ENCODE measurements at regions of chr2 and their contacts with region 1.

Region 1: GRCh38 chr2:216108967-216109921 is at the start of gene XRCC5:
- DNase-seq: peak; percentile 99
- H3K4me3 Mint-ChIP-seq: peak within 1 kb of the TSS; percentile 100
- H3K27ac Mint-ChIP-seq: peak within 1 kb of the TSS; percentile 98
- H3K4me1 Mint-ChIP-seq: peaks cover 47% of the 10 kb centered on the region
- H3K27me3 Mint-ChIP-seq: peaks cover 4% of the 10 kb centered on the region
- total RNA-seq, gene XRCC5: 476 and 510 TPM in 2 replicates

Region 2: GRCh38 chr2:215311625-215312396 is 797.4 kb before region 1 on chr2 and contains the start of gene ATIC:
- intact Hi-C with region 1: loop called (anchors 5 kb)
- DNase-seq: peak; percentile 98
- H3K4me3 Mint-ChIP-seq: peak within 1 kb of the TSS; percentile 95
- H3K27ac Mint-ChIP-seq: peak within 1 kb of the TSS; percentile 95
- H3K4me1 Mint-ChIP-seq: peaks cover 31% of the 10 kb centered on the region
- H3K27me3 Mint-ChIP-seq: peaks cover 4% of the 10 kb centered on the region
- total RNA-seq, gene ATIC: 316 and 322 TPM in 2 replicates

Region 3: GRCh38 chr2:216034065-216034464 is 75.2 kb before region 1 on chr2:
- intact Hi-C with region 1: loop called (anchors 2 kb)
- DNase-seq: peak; percentile 94
- H3K4me3 Mint-ChIP-seq: no peak overlapping the region
- H3K27ac Mint-ChIP-seq: no peak overlapping the region
- H3K4me1 Mint-ChIP-seq: peaks cover 36% of the 10 kb centered on the region
- H3K27me3 Mint-ChIP-seq: no peaks in the 10 kb centered on the region

Region 4: DNA sequence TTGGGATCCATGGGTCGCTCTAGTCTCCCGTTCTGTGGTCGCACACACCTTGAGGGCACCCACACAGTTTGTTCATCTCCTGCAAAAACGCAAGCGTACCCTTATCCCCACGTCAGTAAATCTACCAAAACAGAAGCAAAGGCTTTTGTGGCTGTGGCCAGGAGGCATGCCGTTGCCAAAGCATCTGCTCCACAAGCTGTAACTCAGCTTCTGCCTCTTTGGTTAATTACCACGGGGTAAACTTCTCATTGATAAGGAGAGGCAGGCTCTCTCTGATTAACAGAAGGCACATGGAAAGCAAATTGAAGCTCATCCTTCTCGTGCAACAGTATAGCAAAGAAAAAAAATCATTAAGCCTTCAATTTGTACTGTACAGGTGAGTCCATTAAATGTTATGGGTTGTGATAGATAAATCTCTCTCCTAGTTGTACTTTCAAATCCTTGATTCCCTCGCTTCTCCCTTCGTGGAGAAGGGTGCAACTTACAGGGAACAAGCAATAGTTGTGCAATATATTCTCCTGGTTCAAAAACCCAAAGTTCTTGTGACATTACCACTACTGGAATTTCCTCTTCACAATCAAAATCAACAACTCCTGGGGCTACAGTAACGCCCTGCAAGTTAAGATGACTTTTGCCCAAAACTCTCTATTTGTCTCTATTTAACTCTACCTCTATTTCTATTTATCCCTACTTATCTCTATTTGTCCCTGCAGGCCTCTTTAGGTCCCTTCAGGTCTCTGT is 38.0 kb before region 1 on chr2:
- intact Hi-C with region 1: loop called (anchors 5 kb)
- DNase-seq: no peak
- H3K4me3 Mint-ChIP-seq: no peak overlapping the region
- H3K27ac Mint-ChIP-seq: no peak overlapping the region
- H3K4me1 Mint-ChIP-seq: peaks cover 26% of the 10 kb centered on the region
- H3K27me3 Mint-ChIP-seq: no peaks in the 10 kb centered on the region

Region 5: DNA sequence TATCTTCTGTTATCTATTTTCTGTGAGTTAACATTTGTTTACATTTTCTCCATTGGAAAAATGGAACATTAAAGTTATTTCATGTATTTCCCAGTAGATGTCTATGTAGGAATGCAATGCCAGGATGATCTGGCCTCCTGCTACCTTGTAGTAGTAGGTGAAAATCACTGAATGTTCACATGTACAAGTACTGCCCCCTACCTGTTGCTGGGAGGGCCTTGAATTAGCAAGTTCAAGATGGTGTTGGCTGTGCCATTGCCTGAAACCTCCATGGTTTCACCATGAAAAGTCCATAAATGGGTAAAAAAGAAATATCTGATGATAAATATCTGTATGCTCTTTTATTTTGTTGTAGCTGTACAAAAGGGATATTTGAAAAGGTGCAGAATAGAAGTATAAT is 30.6 kb after region 1 on chr2:
- intact Hi-C with region 1: loop called (anchors 1 kb)
- DNase-seq: peak; percentile 80
- H3K4me3 Mint-ChIP-seq: no peak overlapping the region
- H3K27ac Mint-ChIP-seq: peak overlapping the region; percentile 46
- H3K4me1 Mint-ChIP-seq: peaks cover 31% of the 10 kb centered on the region
- H3K27me3 Mint-ChIP-seq: no peaks in the 10 kb centered on the region

Region 6: GRCh38 chr2:216412022-216412999 is 303.1 kb after region 1 on chr2 and contains the start of gene SMARCAL1:
- intact Hi-C with region 1: loop called (anchors 2 kb)
- DNase-seq: peak; percentile 99
- H3K4me3 Mint-ChIP-seq: peak within 1 kb of the TSS; percentile 100
- H3K27ac Mint-ChIP-seq: peak within 1 kb of the TSS; percentile 96
- H3K4me1 Mint-ChIP-seq: peaks cover 16% of the 10 kb centered on the region
- H3K27me3 Mint-ChIP-seq: peaks cover 11% of the 10 kb centered on the region
- total RNA-seq, gene SMARCAL1: 27.4 and 29.0 TPM in 2 replicates

Region 7: DNA sequence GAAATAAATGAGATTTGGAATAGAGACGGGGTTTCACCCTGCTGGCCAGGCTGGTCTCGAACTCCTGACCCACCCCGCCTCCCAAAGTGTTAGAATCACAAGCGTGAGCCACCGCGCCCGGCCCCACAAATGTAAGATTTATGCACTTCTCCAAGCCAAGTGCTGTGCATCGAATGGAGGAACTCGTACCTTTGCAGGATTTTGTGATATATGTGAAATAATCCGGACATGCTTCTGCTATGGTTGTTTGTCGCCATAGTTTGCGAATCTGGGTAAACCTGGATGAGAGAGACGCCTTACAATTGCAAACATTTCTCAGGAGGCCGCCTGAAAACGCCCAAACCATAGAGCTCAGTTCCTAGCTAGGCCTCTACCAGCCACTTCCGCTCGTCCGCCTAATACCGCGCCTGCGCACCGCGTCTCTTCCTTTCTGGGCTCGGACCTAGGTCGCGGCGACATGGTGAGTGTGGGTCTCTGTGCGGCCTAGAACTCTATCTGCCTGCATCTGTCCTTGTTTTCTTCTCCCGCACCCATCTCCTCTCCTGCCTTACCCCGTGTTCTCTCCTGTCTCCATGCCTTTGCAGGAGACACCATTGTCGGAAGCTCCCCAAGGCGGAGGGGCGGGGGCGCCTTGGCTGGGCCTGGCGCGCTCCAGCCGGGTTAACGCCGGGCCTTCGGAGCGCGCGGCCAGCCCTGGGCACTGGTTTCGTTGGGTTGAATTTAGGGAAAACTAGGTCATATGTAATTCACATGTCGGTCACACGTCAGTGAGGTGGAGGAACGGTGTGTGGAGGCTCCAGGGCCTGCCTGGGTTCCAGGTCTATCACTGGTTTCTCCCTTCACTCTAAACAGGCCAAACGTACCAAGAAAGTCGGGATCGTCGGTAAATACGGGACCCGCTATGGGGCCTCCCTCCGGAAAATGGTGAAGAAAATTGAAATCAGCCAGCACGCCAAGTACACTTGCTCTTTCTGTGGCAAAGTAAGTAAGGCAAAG is 389.5 kb after region 1 on chr2 and contains the start of gene RPL37A:
- intact Hi-C with region 1: loop called (anchors 2 kb)
- DNase-seq: peak; percentile 97
- H3K4me3 Mint-ChIP-seq: peak within 1 kb of the TSS; percentile 100
- H3K27ac Mint-ChIP-seq: peak within 1 kb of the TSS; percentile 95
- H3K4me1 Mint-ChIP-seq: peaks cover 50% of the 10 kb centered on the region
- H3K27me3 Mint-ChIP-seq: no peaks in the 10 kb centered on the region
- total RNA-seq, gene RPL37A: 3,125 and 3,168 TPM in 2 replicates

Measured in activated CD4-positive, alpha-beta T cell treated with anti-CD3 and anti-CD28 coated beads, Interleukin-2, amount 10 ng/mL, durations not matched to agents 24 days and 14 days (primary cell).